ENCODE measurements at regions of chr5 and their contacts with region 1.

Region 1: DNA sequence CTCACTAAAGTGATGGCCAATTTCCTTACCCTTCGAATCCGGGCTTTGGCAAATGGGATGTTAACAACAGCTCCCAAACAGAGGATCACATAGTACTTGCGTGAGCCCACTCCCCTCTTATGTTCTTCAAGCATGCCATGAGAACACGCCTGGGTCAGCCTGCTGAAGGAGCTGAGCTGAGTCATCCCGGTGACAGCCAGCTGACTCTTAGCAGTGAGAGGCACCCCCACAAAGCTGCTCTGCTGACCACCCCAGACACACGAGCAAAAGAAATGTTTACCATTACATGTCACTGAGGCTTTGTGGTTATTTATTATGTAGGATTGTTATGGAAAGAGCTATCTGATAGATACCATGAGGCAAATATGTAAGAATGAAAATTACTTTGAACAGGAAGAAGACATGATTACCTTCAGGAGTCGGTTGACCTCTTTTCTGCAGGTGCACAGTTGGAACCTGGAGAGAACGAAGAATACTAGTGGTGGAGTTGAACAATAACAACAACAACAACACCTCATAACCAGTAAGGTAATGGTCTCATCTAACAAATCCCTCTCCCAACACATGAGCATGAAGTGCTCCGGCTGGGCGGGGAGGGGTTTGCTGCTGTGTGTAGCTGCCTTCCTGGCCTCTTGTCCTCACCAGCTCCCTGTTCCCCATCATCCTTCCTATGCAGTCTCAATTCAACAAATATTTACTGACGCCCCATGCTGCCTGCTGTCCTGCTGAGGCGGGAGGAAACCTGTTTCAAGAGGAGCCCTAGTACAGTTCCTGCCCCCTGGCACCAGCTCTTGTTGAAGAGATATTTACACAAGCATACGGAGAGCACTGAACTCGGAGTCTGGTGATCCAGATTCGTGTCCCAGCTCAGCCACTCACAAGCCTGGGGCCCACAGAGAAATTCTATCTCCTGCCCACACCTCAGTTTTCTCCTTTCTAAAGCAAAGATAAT is 69.4 kb upstream of the LHFPL2 start:
- DNase-seq: peak; percentile 40
- H3K4me3 ChIP-seq: peak overlapping the region; percentile 71
- H3K27ac ChIP-seq: peak overlapping the region; percentile 99
- H3K4me1 ChIP-seq: peaks cover 71% of the 10 kb centered on the region
- CTCF ChIP-seq: no peak

Region 2: DNA sequence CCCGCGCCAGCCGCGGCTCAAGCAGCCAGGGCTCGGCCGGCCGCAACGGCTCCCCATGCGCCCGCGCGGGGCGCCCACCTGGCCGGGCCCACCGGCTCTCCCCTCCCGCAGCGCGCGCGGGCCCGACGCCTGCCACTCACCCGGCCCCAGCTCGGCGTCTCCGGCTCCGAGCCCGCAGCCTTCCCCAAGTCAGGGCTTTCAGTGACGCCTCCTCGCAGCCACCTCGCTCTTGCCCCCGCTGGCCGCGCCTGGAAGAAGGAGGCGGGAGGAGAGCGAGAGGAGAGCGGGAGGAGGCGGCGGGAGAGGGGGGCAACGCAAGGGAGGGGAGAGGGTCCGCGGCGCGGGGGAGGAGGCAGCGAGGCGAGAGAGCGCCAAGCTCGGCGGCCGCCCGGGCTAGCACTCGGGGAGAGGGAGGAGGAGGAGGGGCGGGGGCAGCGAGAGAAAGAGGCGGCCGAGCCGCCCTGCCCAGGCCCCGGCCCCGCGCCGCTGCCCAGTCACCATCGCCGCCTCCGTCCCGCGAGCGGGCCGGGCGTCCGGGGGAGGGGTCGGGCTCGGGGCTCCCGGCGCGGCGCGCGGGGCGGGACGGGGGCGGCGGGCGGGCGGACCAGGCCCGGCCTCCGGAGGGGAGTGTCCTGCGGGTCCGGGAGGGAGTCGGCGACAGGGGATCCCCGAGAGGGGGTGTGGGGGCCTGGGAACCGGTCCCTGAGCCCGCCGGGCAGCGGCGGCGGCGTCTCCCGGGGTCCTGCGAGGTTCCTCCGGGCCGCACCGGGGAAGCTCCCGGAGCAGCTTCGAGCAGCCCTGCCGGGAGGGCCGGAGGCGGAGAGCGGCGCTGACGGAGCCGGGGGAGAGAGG is 69.4 kb before region 1 on chr5 and contains the start of gene LHFPL2:
- CTCF ChIA-PET with region 1: no interaction called
- POLR2A ChIA-PET with region 1: interaction called, 3 read pairs
- intact Hi-C with region 1: loop called (anchors 5 kb)
- DNase-seq: peak; percentile 75
- H3K4me3 ChIP-seq: peak within 1 kb of the TSS; percentile 77
- H3K27ac ChIP-seq: peak within 1 kb of the TSS; percentile 20
- H3K4me1 ChIP-seq: peaks cover 31% of the 10 kb centered on the region
- CTCF ChIP-seq: 0 out of 2 replicates have a peak, but pooled peaks have one; percentile 39
- total RNA-seq, gene LHFPL2: 8.4 and 12.2 TPM in 2 replicates

Region 3: GRCh38 chr5:78771260-78772205 is 53.6 kb after region 1 on chr5:
- CTCF ChIA-PET with region 1: interaction called, 3 read pairs
- POLR2A ChIA-PET with region 1: interaction called, 10 read pairs
- intact Hi-C with region 1: no loop called
- DNase-seq: peak; percentile 64
- H3K4me3 ChIP-seq: peak overlapping the region; percentile 3
- H3K27ac ChIP-seq: peak overlapping the region; percentile 46
- H3K4me1 ChIP-seq: peaks cover 53% of the 10 kb centered on the region
- CTCF ChIP-seq: no peak

Region 4: GRCh38 chr5:78799266-78800017 is 81.5 kb after region 1 on chr5:
- CTCF ChIA-PET with region 1: no interaction called
- POLR2A ChIA-PET with region 1: interaction called, 11 read pairs
- intact Hi-C with region 1: no loop called
- DNase-seq: no peak
- H3K4me3 ChIP-seq: no peak overlapping the region
- H3K27ac ChIP-seq: no peak overlapping the region
- H3K4me1 ChIP-seq: peaks cover 20% of the 10 kb centered on the region
- CTCF ChIP-seq: no peak